Ovary (tissue), 10 donors: ENCODE measurements at regions of chr17 and their contacts with region 1.

Region 1: DNA sequence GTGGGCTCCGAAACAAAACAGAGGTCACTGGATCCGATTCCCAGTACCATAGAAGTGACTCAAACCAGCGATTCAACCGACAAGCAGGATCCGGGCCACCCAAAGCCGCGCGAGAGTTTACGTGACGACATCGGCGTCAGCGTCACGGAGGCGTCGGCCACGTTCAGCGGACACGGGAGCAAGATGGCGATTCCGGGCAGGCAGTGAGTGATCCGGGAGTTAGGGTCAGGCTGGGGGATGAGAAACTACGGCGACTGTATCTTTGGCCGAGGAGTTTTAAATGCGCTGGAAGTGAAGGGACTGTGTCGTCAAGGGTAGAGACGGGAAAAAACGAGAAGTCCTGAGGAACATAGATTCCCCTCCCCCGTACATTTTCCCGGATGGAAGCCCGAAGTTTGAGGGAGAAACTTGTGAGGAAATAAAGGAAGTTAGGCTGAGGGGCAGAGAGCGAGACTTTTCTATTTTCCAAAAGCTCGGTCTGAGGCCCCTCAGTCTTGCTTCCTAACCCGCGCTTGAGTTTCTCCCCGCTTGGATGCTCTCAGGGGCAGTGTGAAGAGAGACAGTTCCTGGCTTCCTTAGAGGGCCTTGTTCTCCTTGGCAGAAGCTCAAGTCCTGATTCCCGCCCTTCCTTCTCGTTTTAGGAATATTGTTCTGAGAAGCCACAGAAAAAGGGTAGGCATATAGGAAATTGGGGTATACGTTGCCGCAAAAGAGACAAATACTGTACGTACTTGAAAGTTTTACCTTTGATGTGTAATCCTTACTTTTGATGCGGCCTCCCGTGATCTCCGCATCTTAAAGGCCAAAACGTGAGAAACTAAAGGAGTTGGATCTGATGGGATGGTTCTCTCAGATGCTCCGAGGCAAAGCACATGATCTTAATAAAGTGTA is at the start of gene NSRP1:
- DNase-seq: peak; percentile 93 to 96 (median 96)
- H3K4me3 ChIP-seq: peak within 1 kb of the TSS; percentile 64
- H3K27ac ChIP-seq: peak within 1 kb of the TSS; percentile 85 to 98
- H3K4me1 ChIP-seq: peaks cover 1% of the 10 kb centered on the region
- H3K27me3 ChIP-seq: no peaks in the 10 kb centered on the region
- CTCF ChIP-seq: no peak
- EP300 ChIP-seq: peak; percentile 68
- POLR2A ChIP-seq: peak; percentile 100
- total RNA-seq, gene NSRP1: 19.0 to 42.1 (median 26.6) TPM

Region 2: GRCh38 chr17:30000001-30000754 is 116.7 kb before region 1 on chr17:
- intact Hi-C with region 1: no loop called
- DNase-seq: no peak
- H3K4me3 ChIP-seq: no peak overlapping the region
- H3K27ac ChIP-seq: no peak overlapping the region
- H3K4me1 ChIP-seq: no peaks in the 10 kb centered on the region
- H3K27me3 ChIP-seq: no peaks in the 10 kb centered on the region
- CTCF ChIP-seq: no peak
- EP300 ChIP-seq: no peak
- POLR2A ChIP-seq: no peak

Region 3: DNA sequence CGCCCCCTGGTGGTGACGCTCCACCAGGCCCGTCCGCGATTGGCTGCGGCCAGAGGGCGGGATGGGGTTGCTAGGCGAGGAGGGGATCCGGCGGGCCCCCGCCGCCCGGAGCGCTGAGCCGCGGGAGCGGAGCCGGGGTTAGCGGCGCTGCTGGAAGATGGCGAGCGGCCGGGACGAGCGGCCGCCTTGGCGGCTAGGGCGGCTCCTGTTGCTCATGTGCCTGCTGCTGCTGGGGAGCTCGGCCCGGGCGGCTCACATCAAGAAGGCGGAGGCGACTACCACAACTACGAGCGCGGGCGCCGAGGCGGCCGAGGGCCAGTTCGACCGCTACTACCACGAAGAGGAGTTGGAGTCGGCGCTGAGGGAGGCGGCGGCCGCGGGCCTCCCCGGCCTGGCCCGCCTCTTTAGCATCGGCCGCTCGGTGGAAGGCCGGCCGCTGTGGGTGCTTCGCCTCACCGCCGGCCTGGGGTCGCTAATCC is 262.0 kb after region 1 on chr17 and contains the start of gene CPD:
- intact Hi-C with region 1: loop called in 1 of 4 experiments (anchors 5 kb)
- DNase-seq: peak; percentile 96 to 99 (median 98)
- H3K4me3 ChIP-seq: peak within 1 kb of the TSS; percentile 88
- H3K27ac ChIP-seq: peak within 1 kb of the TSS; percentile 32 to 73
- H3K4me1 ChIP-seq: peaks cover 4% of the 10 kb centered on the region
- H3K27me3 ChIP-seq: no peaks in the 10 kb centered on the region
- CTCF ChIP-seq: no peak
- EP300 ChIP-seq: no peak
- POLR2A ChIP-seq: peak; percentile 89
- total RNA-seq, gene CPD: 24.4 to 53.8 (median 30.8) TPM

Region 4: GRCh38 chr17:30413109-30413508 is 296.2 kb after region 1 on chr17:
- intact Hi-C with region 1: no loop called
- DNase-seq: no peak
- H3K4me3 ChIP-seq: no peak overlapping the region
- H3K27ac ChIP-seq: no peak overlapping the region
- H3K4me1 ChIP-seq: no peaks in the 10 kb centered on the region
- H3K27me3 ChIP-seq: no peaks in the 10 kb centered on the region
- CTCF ChIP-seq: no peak
- EP300 ChIP-seq: no peak
- POLR2A ChIP-seq: no peak